Natural killer cell (primary cell): ENCODE measurements at regions of chr4 and their contacts with region 1.

Region 1: GRCh38 chr4:90695411-90695810 is 568.2 kb downstream of the CCSER1 start:
- DNase-seq: no peak
- ATAC-seq: no peak
- H3K4me3 ChIP-seq: no peak overlapping the region
- H3K4me3 Mint-ChIP-seq: no peak overlapping the region
- H3K27ac ChIP-seq: no peak overlapping the region
- H3K27ac Mint-ChIP-seq: no peak overlapping the region
- H3K4me1 ChIP-seq: no peaks in the 10 kb centered on the region
- H3K4me1 Mint-ChIP-seq: no peaks in the 10 kb centered on the region
- H3K27me3 ChIP-seq: no peaks in the 10 kb centered on the region
- H3K27me3 Mint-ChIP-seq: no peaks in the 10 kb centered on the region
- CTCF ChIP-seq: no peak

Region 2: GRCh38 chr4:90293320-90293719 is 402.1 kb before region 1 on chr4:
- intact Hi-C with region 1: no loop called
- DNase-seq: no peak
- ATAC-seq: no peak
- H3K4me3 ChIP-seq: no peak overlapping the region
- H3K4me3 Mint-ChIP-seq: no peak overlapping the region
- H3K27ac ChIP-seq: no peak overlapping the region
- H3K27ac Mint-ChIP-seq: no peak overlapping the region
- H3K4me1 ChIP-seq: no peaks in the 10 kb centered on the region
- H3K4me1 Mint-ChIP-seq: no peaks in the 10 kb centered on the region
- H3K27me3 ChIP-seq: no peaks in the 10 kb centered on the region
- H3K27me3 Mint-ChIP-seq: no peaks in the 10 kb centered on the region
- CTCF ChIP-seq: no peak

Region 3: DNA sequence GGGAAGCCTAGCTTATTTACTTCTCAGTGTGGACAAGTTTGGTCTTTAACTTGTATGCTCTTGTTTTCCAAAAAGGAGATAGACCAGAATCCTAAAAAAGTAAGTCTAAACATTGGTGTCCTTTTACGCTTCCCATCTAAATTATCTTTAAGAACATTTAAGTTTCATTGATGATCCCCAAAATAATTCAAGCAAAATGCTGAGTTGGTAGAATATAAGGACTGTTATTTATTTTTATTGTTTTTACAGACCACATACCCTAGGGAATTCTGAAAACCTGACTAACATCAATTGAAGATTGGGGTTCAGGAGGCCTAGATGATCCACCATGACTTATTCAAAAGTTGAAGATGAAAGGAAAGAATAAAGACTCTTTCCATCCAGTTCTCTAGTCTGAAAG is 84.8 kb after region 1 on chr4:
- intact Hi-C with region 1: no loop called
- DNase-seq: no peak
- ATAC-seq: no peak
- H3K4me3 ChIP-seq: no peak overlapping the region
- H3K4me3 Mint-ChIP-seq: no peak overlapping the region
- H3K27ac ChIP-seq: no peak overlapping the region
- H3K27ac Mint-ChIP-seq: no peak overlapping the region
- H3K4me1 ChIP-seq: no peaks in the 10 kb centered on the region
- H3K4me1 Mint-ChIP-seq: no peaks in the 10 kb centered on the region
- H3K27me3 ChIP-seq: no peaks in the 10 kb centered on the region
- H3K27me3 Mint-ChIP-seq: no peaks in the 10 kb centered on the region
- CTCF ChIP-seq: no peak

Region 4: GRCh38 chr4:91681544-91681943 is 986.1 kb after region 1 on chr4:
- intact Hi-C with region 1: loop called (anchors 10 kb)
- DNase-seq: no peak
- ATAC-seq: no peak
- H3K4me3 ChIP-seq: no peak overlapping the region
- H3K4me3 Mint-ChIP-seq: no peak overlapping the region
- H3K27ac ChIP-seq: no peak overlapping the region
- H3K27ac Mint-ChIP-seq: no peak overlapping the region
- H3K4me1 ChIP-seq: no peaks in the 10 kb centered on the region
- H3K4me1 Mint-ChIP-seq: no peaks in the 10 kb centered on the region
- H3K27me3 ChIP-seq: no peaks in the 10 kb centered on the region
- H3K27me3 Mint-ChIP-seq: no peaks in the 10 kb centered on the region
- CTCF ChIP-seq: no peak